Activated T-helper 2 cell treated with anti-CD3 and anti-CD28 coated beads, Interferon-gamma antibody, Interleukin-2, Interleukin-4, amounts not matched to agents 10 μg/mL and 5 μg/mL and 100 μg/mL, durations not matched to agents 14 hours and 24 hours and 36 hours (primary cell): ENCODE measurements at regions of chr22 and their contacts with region 1.

Region 1: GRCh38 chr22:29040385-29041275 is 21.0 kb downstream of the C22orf31 start:
- DNase-seq: peak; percentile 41
- H3K4me3 Mint-ChIP-seq: no peak overlapping the region
- H3K27ac Mint-ChIP-seq: no peak overlapping the region
- H3K4me1 Mint-ChIP-seq: no peaks in the 10 kb centered on the region
- H3K27me3 Mint-ChIP-seq: peaks cover 16% of the 10 kb centered on the region

Region 2: GRCh38 chr22:28600546-28601143 is 440.0 kb before region 1 on chr22:
- intact Hi-C with region 1: loop called (anchors 5 kb)
- DNase-seq: no peak
- H3K4me3 Mint-ChIP-seq: no peak overlapping the region
- H3K27ac Mint-ChIP-seq: no peak overlapping the region
- H3K4me1 Mint-ChIP-seq: no peaks in the 10 kb centered on the region
- H3K27me3 Mint-ChIP-seq: peaks cover 32% of the 10 kb centered on the region

Region 3: DNA sequence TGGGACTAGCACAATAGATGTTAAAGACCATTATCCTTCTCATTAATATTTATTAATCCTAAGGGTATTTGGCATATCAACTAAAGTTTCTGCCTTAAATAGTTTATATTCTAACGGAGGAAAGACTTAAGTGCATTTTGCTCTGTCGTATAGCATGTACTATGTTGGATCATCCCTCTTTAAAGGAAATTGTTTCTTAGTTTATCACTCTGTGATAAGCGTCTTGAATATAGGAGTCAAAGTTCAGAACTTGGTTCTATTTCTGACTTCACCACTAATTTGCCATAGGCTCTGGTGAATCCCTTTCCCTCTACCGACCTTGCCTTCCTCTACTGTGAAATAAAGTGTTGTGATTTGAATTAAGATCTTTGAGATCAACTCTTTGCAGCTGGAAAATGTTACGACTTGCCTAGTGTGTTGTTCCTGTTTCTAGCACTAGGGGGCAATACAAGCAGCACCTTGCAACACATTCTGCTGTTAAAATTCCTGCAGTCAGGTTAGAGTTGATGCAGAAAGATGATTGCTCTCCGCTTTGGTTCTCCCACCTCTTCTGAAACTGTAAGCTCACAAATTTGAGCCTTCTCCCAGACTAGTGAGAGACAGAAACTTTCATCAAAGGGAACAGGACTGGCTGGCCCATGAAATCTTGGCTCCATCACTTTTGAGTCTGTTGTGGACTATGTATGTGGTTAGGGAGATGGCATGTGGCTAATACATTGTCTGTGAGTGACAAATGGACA is 185.1 kb before region 1 on chr22:
- intact Hi-C with region 1: loop called (anchors 1 kb)
- DNase-seq: peak; percentile 23
- H3K4me3 Mint-ChIP-seq: no peak overlapping the region
- H3K27ac Mint-ChIP-seq: no peak overlapping the region
- H3K4me1 Mint-ChIP-seq: no peaks in the 10 kb centered on the region
- H3K27me3 Mint-ChIP-seq: peaks cover 8% of the 10 kb centered on the region